HepG2 (cell line): ENCODE measurements at regions of chr13 and their contacts with region 1.

Region 1: GRCh38 chr13:49098771-49099512 is 121.2 kb upstream of the MLNR start:
- DNase-seq: no peak
- ATAC-seq: peak; percentile 62
- H3K4me3 ChIP-seq: no peak overlapping the region
- H3K27ac ChIP-seq: no peak overlapping the region
- H3K4me1 ChIP-seq: peaks cover 22% of the 10 kb centered on the region; the same call in 1 of the 2 replicates
- H3K27me3 ChIP-seq: no peaks in the 10 kb centered on the region
- CTCF ChIP-seq: peak; percentile 56
- EP300 ChIP-seq: no peak
- POLR2A ChIP-seq: no peak
- RAD21 ChIP-seq: no peak

Region 2: GRCh38 chr13:49033101-49033500 is 65.8 kb before region 1 on chr13:
- CTCF ChIA-PET with region 1: no interaction called
- POLR2A ChIA-PET with region 1: no interaction called
- in situ Hi-C with region 1: loop called (anchors 10 kb)
- intact Hi-C with region 1: no loop called
- DNase-seq: no peak
- ATAC-seq: no peak
- H3K4me3 ChIP-seq: no peak overlapping the region
- H3K27ac ChIP-seq: no peak overlapping the region
- H3K4me1 ChIP-seq: no peaks in the 10 kb centered on the region
- H3K27me3 ChIP-seq: no peaks in the 10 kb centered on the region
- CTCF ChIP-seq: no peak
- EP300 ChIP-seq: no peak
- POLR2A ChIP-seq: no peak
- RAD21 ChIP-seq: no peak

Region 3: DNA sequence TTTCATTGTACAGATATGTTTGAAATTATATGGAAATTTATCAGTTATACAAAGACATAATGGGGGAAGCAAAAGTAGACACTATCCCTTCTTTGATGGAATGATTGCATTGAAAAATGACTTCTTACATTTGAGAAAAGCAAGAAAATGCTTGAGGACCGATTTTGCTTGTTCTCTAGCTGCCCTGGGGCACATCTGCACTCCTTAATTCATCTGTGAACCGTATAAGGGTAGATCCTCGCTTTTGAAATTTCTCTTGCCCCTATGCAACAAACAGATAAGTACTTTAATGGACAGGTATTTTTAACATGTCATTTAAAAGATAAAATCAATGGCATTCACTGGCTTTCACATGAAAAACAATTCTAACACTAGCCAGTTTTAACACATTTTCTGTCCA is 107.7 kb after region 1 on chr13:
- CTCF ChIA-PET with region 1: no interaction called
- POLR2A ChIA-PET with region 1: no interaction called
- in situ Hi-C with region 1: no loop called
- intact Hi-C with region 1: no loop called
- DNase-seq: no peak
- ATAC-seq: no peak
- H3K4me3 ChIP-seq: no peak overlapping the region
- H3K27ac ChIP-seq: no peak overlapping the region
- H3K4me1 ChIP-seq: no peaks in the 10 kb centered on the region
- H3K27me3 ChIP-seq: no peaks in the 10 kb centered on the region
- CTCF ChIP-seq: no peak
- EP300 ChIP-seq: no peak
- POLR2A ChIP-seq: no peak
- RAD21 ChIP-seq: no peak

Region 4: GRCh38 chr13:49292742-49293486 is 194.0 kb after region 1 on chr13:
- CTCF ChIA-PET with region 1: no interaction called
- POLR2A ChIA-PET with region 1: no interaction called
- in situ Hi-C with region 1: no loop called
- intact Hi-C with region 1: no loop called
- DNase-seq: no peak
- ATAC-seq: no peak
- H3K4me3 ChIP-seq: no peak overlapping the region
- H3K27ac ChIP-seq: no peak overlapping the region
- H3K4me1 ChIP-seq: peaks cover 26% of the 10 kb centered on the region
- H3K27me3 ChIP-seq: no peaks in the 10 kb centered on the region
- CTCF ChIP-seq: no peak
- EP300 ChIP-seq: no peak
- POLR2A ChIP-seq: no peak
- RAD21 ChIP-seq: no peak